ENCODE measurements at regions of chr18 and their contacts with region 1.

Region 1: DNA sequence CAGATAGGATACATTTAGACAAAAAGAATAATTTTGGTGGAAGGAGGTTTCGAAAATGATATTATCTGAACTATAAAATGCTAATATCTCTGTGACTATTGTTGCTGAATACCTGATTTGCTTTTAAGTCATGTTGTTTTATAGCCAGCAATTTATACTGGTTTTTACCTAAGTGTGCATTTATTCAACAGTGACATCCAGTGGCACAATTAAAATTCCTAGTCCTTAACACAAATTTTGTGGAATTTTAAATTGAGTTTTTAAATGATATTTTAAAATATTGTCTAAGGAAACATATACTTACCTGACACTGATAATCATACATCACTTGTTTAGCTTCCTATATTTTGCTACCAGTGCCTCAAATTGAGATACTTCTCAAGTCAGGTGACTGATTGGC is 144.8 kb downstream of the ARHGAP28 start:
- DNase-seq: no peak
- H3K4me3 Mint-ChIP-seq: no peak overlapping the region
- H3K27ac Mint-ChIP-seq: no peak overlapping the region
- H3K4me1 Mint-ChIP-seq: peaks cover 5% of the 10 kb centered on the region
- H3K27me3 Mint-ChIP-seq: no peaks in the 10 kb centered on the region
- CTCF ChIP-seq: peak; percentile 43

Region 2: DNA sequence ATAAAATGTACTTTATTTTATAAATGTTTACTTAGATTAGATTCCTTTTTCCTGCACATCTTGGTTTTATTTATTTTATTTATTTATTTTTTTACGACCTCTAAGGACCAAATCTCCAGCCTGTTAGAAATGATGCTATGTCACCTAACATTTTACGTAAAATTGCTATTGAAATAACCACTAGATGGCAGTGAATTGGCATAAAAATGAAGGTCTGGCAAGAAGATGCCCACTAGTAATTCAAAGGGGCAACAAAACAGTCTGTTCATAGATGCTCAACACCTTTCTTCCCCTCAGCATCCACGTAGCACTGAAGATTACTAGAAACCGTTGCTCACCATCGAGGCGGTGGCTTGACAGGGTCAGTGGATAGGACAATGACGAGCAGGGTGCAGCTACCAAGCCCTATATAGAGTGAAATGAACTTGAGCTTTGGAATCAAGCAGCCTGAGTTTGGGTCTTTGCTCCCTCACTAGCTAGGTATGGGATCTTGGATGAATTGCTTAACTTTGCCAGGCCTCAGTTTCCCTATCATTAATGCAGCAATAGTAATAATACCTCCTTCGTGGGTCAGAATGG is 330.9 kb before region 1 on chr18:
- CTCF ChIA-PET with region 1: interaction called, 8 read pairs
- POLR2A ChIA-PET with region 1: no interaction called
- intact Hi-C with region 1: loop called (anchors 1 kb)
- DNase-seq: peak; percentile 12
- H3K4me3 Mint-ChIP-seq: no peak overlapping the region
- H3K27ac Mint-ChIP-seq: no peak overlapping the region
- H3K4me1 Mint-ChIP-seq: peaks cover 27% of the 10 kb centered on the region
- H3K27me3 Mint-ChIP-seq: no peaks in the 10 kb centered on the region
- CTCF ChIP-seq: peak; percentile 21

Region 3: DNA sequence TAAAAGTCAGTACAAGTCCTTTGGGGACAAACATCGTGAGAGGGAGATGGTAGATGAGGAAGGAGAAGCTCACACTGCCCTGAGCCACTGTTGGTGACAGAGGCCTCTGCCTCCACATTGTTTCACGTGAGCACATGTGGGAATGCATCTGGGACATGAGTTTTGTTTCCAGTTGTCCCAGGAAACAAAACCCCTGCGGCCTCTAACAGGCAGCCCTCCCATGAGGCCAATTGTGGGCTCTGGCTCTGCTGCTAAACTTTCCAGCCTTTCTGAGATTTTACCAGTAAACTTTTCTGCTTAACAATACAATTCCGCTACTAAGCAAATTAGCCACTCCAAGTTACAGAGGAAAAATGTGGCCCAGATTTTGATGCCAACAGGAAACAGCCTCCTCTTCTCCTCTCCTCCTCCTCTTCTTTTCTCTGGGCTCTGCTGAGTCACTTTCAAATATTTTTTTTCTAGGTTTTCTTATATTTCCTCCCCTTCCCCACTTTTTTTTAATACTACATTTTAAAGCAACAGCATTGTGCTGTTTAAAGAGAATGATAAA is 333.1 kb after region 1 on chr18:
- CTCF ChIA-PET with region 1: no interaction called
- POLR2A ChIA-PET with region 1: no interaction called
- intact Hi-C with region 1: no loop called
- DNase-seq: no peak
- H3K4me3 Mint-ChIP-seq: no peak overlapping the region
- H3K27ac Mint-ChIP-seq: no peak overlapping the region
- H3K4me1 Mint-ChIP-seq: no peaks in the 10 kb centered on the region
- H3K27me3 Mint-ChIP-seq: peaks cover 5% of the 10 kb centered on the region
- CTCF ChIP-seq: no peak